PC-9 (cell line): ENCODE measurements at regions of chr1 and their contacts with region 1.

Region 1: DNA sequence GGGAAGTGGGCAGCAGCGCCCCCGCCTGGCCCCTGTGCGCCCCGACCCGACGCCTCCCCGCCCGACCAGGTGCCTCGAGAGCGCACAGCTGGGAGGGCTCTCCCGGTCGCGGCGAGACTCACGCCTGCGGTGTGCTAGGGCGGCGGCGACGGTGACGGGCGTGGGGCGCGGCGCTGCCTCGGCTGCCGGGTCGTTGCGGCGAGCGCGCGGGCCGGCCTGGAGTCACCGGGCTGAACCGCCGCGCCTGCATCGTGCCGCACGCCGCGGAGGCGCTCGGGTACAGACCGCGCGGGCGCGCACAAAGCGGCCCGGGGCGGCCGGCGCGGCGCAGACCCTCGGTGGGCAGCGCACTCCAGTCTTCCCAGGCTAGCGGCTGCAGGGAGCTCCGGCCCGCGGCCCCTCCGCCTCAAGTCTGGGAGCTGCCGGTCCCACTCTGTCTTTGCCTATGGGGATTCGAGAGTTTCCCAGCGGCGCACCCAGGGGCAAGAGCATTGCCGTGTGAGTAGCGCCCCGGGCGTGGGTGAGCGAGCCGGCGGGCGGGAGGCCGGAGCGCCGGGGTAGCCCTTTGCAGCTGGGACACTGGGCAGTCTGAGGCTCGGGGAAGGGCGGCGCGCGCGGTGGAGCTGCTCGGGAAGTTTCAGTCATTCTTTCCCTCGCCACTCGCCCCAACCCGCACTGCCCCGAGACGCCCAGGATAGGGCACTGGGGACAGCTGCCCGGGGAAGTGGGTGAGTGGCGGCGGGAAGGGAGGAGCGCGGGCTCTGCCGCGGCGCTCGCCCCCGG is at the start of gene SLC35F3:
- DNase-seq: peak; percentile 53 to 88
- H3K4me3 ChIP-seq: peak within 1 kb of the TSS; percentile 82
- H3K27ac ChIP-seq: no peak within 1 kb of the TSS
- H3K4me1 ChIP-seq: peaks cover 17% of the 10 kb centered on the region
- H3K27me3 ChIP-seq: no peaks in the 10 kb centered on the region
- CTCF ChIP-seq: no peak
- total RNA-seq, gene SLC35F3: 6.1 and 6.4 TPM in 2 replicates

Region 2: DNA sequence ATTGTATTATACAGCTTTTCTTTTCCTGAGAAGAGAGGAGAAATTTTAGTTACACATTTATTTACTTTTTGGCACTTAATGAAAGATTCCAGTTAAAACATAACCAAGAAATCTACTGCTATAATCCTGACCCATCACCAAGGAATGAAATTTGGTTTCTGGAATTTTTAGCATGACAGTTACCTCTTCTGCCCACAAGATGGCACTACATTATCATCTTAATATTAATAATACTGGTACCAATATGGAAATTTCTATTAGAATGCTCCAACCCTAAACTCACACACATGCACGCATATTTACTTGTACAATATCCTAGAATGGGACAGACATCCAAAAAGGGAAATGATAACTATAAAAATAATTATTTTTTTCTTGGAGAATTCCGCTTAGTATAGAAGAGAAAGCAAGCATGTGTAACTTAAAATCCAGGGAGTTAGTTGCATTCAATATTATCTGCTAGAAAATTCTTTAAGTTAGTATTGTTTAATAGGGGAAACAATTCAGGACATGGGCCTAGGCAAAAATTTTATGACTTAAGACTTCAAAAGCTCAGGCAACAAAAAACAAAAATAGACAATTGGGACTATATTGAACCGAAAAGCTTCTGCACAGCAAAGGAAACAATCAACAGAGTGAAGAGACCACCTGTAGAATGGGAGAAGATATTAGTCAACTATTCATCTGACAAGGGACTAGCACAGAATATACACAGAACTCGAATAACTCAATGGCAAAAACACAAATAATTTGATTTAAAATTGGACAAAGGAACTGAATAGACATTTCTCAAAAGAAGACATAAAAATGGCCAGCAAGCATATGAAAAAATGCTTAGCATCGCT is 539.9 kb before region 1 on chr1:
- CTCF ChIA-PET with region 1: no interaction called
- POLR2A ChIA-PET with region 1: interaction called, 3 read pairs
- intact Hi-C with region 1: loop called (anchors 10 kb)
- DNase-seq: peak in 1 of 2 experiments; percentile 36
- H3K4me3 ChIP-seq: no peak overlapping the region
- H3K27ac ChIP-seq: no peak overlapping the region
- H3K4me1 ChIP-seq: peaks cover 26% of the 10 kb centered on the region
- H3K27me3 ChIP-seq: no peaks in the 10 kb centered on the region
- CTCF ChIP-seq: peak; percentile 85

Region 3: GRCh38 chr1:233440951-233441401 is 463.8 kb before region 1 on chr1:
- CTCF ChIA-PET with region 1: no interaction called
- POLR2A ChIA-PET with region 1: no interaction called
- intact Hi-C with region 1: loop called (anchors 2 kb)
- DNase-seq: peak; percentile 47 to 72
- H3K4me3 ChIP-seq: no peak overlapping the region
- H3K27ac ChIP-seq: no peak overlapping the region
- H3K4me1 ChIP-seq: peaks cover 9% of the 10 kb centered on the region; the same call in 1 of the 2 replicates
- H3K27me3 ChIP-seq: no peaks in the 10 kb centered on the region
- CTCF ChIP-seq: peak; percentile 81

Region 4: DNA sequence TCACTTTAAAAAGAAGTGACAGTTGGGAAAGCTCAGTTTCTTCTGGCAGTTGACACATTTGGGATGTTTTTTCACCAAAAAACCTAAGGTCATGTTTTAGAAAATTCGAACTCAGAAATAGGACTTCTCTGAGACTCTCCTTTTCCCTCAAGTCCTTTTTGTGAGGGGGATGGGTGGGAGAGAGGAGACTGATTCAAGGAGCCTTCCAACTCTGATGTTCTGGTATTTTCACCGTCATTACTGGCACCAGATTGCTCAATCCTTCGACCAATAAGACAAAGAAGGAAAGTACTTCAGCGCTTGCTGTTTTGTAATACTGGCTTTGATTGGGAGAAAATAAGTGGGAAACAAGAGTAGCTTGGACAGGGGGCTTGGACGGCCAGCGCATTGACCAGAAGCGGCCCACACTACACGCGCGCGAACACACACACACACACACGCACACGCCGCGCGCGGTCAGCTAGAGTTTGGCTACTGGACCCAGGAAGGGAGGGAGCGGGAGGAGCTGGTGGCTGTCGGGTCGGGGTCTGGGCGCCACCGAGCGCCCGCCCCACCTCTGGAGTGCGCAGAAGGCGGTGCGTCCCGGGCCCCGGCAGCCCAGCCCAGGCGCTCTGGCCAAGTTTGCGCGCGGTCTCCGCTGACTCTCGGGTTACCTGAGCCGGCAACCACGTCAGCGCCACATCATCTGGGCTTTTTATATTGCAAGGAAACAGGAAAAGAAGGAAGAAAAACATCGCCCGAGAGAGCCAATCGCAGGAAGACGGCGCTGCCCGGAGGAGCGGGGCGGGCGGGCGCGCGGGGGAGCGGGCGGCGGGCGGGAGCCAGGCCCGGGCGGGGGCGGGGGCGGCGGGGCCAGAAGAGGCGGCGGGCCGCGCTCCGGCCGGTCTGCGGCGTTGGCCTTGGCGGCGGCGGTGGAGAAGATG is 291.3 kb before region 1 on chr1 and contains the start of gene KCNK1:
- CTCF ChIA-PET with region 1: no interaction called
- POLR2A ChIA-PET with region 1: no interaction called
- intact Hi-C with region 1: loop called (anchors 2 kb)
- DNase-seq: peak; percentile 85 to 93
- H3K4me3 ChIP-seq: peak within 1 kb of the TSS; percentile 62
- H3K27ac ChIP-seq: peak within 1 kb of the TSS; percentile 88
- H3K4me1 ChIP-seq: peaks cover 25% of the 10 kb centered on the region
- H3K27me3 ChIP-seq: no peaks in the 10 kb centered on the region
- CTCF ChIP-seq: no peak
- total RNA-seq, gene KCNK1: 57.6 and 60.6 TPM in 2 replicates

Region 5: DNA sequence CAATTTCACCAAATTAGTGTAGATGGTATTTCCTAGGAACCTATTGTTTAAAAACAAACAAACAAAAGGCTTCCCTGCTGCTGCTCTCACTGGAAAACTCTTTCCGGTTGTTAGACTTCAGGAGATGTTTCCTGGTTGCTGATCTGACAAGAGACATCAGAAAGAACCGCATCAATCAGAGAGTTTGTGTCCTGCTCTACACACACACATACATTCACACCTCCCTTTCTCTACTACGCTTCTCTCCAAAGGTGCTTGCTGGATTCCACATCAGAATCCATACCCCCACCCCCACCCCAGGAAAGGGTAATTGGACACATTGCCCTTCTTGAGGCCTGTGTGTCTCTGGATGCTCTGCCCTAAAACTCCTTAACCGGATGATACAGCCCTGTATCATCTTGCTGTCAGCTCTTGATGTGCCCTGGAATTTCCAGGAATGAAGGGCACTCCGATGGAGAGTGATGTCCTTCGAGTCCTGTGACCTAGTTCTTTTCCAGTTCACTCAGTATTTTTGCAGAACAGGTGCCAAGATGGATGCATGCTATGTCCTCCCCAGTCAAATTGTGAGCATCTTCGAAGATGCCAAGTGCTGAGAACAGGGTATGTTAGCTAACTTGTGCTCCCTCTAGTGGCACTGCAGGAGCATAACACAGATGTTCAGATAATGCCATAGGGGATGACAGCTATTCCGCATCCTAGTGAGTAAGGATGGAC is 114.0 kb before region 1 on chr1:
- CTCF ChIA-PET with region 1: no interaction called
- POLR2A ChIA-PET with region 1: no interaction called
- intact Hi-C with region 1: loop called (anchors 5 kb)
- DNase-seq: peak; percentile 34 to 43
- H3K4me3 ChIP-seq: no peak overlapping the region
- H3K27ac ChIP-seq: no peak overlapping the region
- H3K4me1 ChIP-seq: 0 out of 2 replicates have a peak, but pooled peaks cover 7% of the 10 kb centered on the region
- H3K27me3 ChIP-seq: no peaks in the 10 kb centered on the region
- CTCF ChIP-seq: peak; percentile 97

Region 6: DNA sequence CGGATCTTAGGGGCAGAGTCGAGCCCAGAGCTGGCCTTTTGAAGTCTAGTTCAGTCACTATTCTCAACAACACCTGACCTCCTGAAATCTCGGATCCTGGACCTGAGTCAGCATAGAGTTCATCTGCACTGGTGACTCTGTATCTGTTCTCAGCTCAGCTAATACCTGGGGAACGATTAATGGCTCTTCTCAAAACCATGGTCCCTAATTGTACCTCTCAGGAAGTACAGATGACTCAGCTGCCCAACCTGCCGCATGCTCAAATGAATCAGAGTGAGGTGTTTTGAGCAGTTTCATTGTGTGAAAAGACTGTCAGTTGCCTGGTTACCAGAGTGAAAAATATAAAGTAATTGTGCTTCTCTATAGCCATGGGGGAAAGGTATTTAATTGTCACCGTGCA is 88.8 kb after region 1 on chr1:
- CTCF ChIA-PET with region 1: no interaction called
- POLR2A ChIA-PET with region 1: no interaction called
- intact Hi-C with region 1: loop called (anchors 1 kb)
- DNase-seq: peak; percentile 69 to 96
- H3K4me3 ChIP-seq: no peak overlapping the region
- H3K27ac ChIP-seq: peak overlapping the region; percentile 84
- H3K4me1 ChIP-seq: peaks cover 30% of the 10 kb centered on the region
- H3K27me3 ChIP-seq: no peaks in the 10 kb centered on the region
- CTCF ChIP-seq: no peak